Posterior vena cava (tissue), 2 donors: ENCODE measurements at regions of chr2 and their contacts with region 1.

Region 1: GRCh38 chr2:43239981-43240761 is 13.8 kb upstream of the ZFP36L2 start:
- DNase-seq: no peak

Region 2: GRCh38 chr2:43478411-43479086 is 238.4 kb after region 1 on chr2:
- intact Hi-C with region 1: loop called in 1 of 2 experiments (anchors 5 kb)
- DNase-seq: no peak